ENCODE measurements at regions of chr10 and their contacts with region 1.

Region 1: DNA sequence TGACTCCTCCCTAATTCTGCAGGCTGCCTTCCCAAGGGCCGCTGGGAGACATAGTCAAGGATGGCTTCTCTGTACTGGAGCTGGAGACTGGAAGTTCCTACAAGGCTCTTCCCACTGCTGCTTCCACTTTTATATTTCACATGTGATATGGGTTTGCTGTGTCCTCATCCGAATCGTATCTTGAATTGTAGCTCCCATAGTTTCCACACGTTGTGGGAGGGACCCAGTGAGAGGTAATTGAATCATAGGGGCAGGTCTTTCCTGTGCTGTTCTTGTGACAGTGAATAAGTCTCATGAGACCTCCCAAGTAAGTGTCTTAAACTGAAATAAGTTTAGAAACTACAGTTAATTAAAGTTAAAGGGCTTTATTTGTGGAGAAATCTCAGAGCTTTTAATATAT is 47.0 kb upstream of the BICC1 start:
- DNase-seq: no peak
- H3K4me3 ChIP-seq: no peak overlapping the region
- H3K27ac ChIP-seq: no peak overlapping the region
- H3K4me1 ChIP-seq: no peaks in the 10 kb centered on the region
- H3K27me3 ChIP-seq: no peaks in the 10 kb centered on the region
- CTCF ChIP-seq: no peak
- EP300 ChIP-seq: no peak
- POLR2A ChIP-seq: no peak
- RAD21 ChIP-seq: no peak

Region 2: DNA sequence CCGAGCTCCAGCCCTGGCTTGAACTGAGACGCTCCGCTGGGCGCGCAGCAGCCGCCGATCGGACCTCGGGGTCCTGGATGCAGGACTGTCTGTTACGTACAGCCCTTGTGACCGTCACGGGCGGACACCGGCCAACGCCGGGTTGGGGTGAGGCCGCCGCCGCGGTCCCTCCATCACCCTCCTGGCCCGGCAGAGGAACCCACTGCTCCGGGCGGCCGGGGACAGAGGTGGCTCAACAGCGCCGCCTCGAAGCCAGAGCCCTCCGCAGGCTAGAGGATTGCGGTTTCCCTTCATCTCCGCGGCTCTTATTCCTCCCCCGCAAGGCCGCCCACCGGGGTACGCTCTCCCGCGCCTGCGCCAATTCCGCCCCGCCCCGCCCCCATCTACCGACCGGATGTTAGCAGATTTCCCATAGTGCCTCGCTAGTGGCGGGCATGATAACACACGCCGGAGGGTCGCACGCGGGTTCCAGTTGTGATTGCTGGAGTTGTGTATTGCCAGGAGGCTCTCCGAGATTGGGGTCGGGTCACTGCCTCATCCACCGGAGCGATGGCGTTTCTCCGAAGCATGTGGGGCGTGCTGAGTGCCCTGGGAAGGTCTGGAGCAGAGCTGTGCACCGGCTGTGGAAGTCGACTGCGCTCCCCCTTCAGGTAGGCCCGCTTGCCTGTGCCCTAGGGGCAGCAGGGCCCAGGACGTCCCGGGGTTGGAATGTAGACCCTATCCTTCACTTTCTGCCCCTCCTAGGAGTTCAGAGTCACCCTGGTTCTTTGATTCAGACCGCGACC is 80.4 kb before region 1 on chr10 and contains the start of gene TFAM:
- CTCF ChIA-PET with region 1: no interaction called
- POLR2A ChIA-PET with region 1: no interaction called
- DNase-seq: peak; percentile 53 to 96
- H3K4me3 ChIP-seq: peak within 1 kb of the TSS; percentile 80 to 98 (median 94)
- H3K27ac ChIP-seq: peak within 1 kb of the TSS; percentile 90
- H3K4me1 ChIP-seq: peaks cover 0 to 4% (median 1%) of the 10 kb centered on the region in 4 experiments; a peak in 3 of 7 replicates
- H3K27me3 ChIP-seq: no peaks in the 10 kb centered on the region
- CTCF ChIP-seq: peak in 2 of 3 experiments; percentile 34 to 46
- EP300 ChIP-seq: peak in 1 of 2 experiments; percentile 33; a peak in 1 of 3 replicates
- POLR2A ChIP-seq: peak; percentile 92 to 98
- RAD21 ChIP-seq: peak in 1 of 2 experiments; percentile 7; a peak in 1 of 4 replicates
- total RNA-seq, gene TFAM: 97.3 and 97.5 TPM in 2 replicates

Region 3: GRCh38 chr10:58444876-58445275 is 20.8 kb before region 1 on chr10:
- CTCF ChIA-PET with region 1: interaction called, 16 read pairs
- POLR2A ChIA-PET with region 1: no interaction called
- DNase-seq: no peak
- H3K4me3 ChIP-seq: no peak overlapping the region
- H3K27ac ChIP-seq: no peak overlapping the region
- H3K4me1 ChIP-seq: no peaks in the 10 kb centered on the region
- H3K27me3 ChIP-seq: no peaks in the 10 kb centered on the region
- CTCF ChIP-seq: no peak
- EP300 ChIP-seq: no peak
- POLR2A ChIP-seq: no peak
- RAD21 ChIP-seq: no peak

Region 4: GRCh38 chr10:58451193-58451889 is 14.3 kb before region 1 on chr10:
- CTCF ChIA-PET with region 1: interaction called, 16 read pairs
- POLR2A ChIA-PET with region 1: no interaction called
- DNase-seq: no peak
- H3K4me3 ChIP-seq: no peak overlapping the region
- H3K27ac ChIP-seq: no peak overlapping the region
- H3K4me1 ChIP-seq: no peaks in the 10 kb centered on the region
- H3K27me3 ChIP-seq: no peaks in the 10 kb centered on the region
- CTCF ChIP-seq: no peak
- EP300 ChIP-seq: no peak
- POLR2A ChIP-seq: no peak
- RAD21 ChIP-seq: no peak

Region 5: DNA sequence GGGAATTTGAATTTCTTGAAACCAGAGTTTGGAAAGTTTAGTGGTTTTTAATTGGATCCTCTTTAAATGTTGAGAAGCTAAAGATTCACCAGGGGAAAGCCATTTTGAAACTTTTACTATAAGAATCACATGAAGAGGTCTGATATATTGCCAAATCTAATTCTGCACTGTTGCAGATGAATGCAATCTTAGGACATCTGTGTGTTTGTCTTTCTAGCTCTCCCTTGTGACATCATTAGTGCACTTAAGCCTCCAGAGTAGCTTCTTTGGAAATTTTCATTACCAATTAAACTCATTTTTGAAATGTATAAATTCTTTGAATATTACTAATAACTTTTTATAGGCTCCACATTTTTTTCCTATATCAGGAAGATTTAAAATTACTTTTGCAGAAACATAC is 207.2 kb after region 1 on chr10:
- CTCF ChIA-PET with region 1: no interaction called
- POLR2A ChIA-PET with region 1: no interaction called
- DNase-seq: no peak
- H3K4me3 ChIP-seq: no peak overlapping the region
- H3K27ac ChIP-seq: no peak overlapping the region
- H3K4me1 ChIP-seq: no peaks in the 10 kb centered on the region; a peak in 1 of 7 replicates
- H3K27me3 ChIP-seq: no peaks in the 10 kb centered on the region
- CTCF ChIP-seq: no peak
- EP300 ChIP-seq: no peak
- POLR2A ChIP-seq: no peak
- RAD21 ChIP-seq: no peak